Endothelial cell of umbilical vein (primary cell): ENCODE measurements at regions of chr19 and their contacts with region 1.

Region 1: DNA sequence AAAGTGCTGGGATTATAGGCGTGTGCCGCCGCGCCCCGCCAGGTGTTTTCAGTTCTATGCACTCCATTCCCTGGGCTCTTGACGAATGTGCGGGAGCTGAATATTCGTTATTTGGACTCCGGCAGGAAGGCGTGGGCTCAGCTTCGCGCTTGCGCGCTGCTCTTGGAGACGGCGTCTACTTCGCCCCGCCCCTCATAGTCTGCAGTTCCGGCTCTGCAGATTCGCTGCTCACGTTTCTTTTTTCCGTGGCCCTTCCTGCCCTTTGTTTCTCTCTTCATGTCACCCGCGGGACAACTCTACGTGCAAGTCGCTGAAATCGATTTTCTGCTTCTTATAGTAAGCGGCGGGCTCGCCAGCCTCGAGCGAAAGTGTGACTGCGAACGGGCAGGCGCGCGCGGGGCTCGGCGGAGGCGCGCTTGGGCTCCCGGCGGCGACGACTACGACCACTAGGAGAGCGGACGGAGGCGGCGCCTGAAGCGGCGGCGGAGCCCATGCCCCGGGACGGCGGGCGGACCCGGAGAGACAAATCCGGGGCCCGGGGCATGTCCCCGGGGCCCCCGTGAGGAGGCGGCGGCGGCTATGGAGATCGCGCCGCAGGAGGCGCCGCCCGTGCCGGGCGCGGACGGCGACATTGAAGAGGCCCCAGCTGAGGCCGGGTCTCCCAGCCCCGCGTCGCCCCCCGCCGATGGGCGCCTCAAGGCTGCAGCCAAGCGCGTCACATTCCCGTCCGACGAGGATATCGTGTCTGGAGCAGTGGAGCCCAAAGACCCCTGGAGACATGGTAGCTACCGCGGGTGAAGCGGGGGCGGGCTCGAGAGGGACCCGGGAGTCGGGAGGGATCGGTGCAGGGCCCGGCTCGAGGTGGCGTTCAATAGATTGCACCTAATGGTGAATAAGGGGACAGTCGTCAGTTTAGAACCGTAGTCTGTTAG is at the start of gene PPP1R37:
- DNase-seq: peak; percentile 96
- H3K4me3 ChIP-seq: peak within 1 kb of the TSS; percentile 76 to 93 (median 80)
- H3K27ac ChIP-seq: peak within 1 kb of the TSS; percentile 86
- H3K4me1 ChIP-seq: peaks cover 14% of the 10 kb centered on the region
- H3K27me3 ChIP-seq: no peaks in the 10 kb centered on the region
- CTCF ChIP-seq: peak; percentile 11 to 43
- POLR2A ChIP-seq: no peak
- total RNA-seq, gene PPP1R37: 27.1 and 28.5 TPM in 2 replicates

Region 2: GRCh38 chr19:44782729-44783128 is 310.3 kb before region 1 on chr19:
- CTCF ChIA-PET with region 1: no interaction called
- POLR2A ChIA-PET with region 1: no interaction called
- dilution Hi-C with region 1: no loop called
- intact Hi-C with region 1: no loop called
- DNase-seq: no peak
- H3K4me3 ChIP-seq: no peak overlapping the region
- H3K27ac ChIP-seq: no peak overlapping the region
- H3K4me1 ChIP-seq: no peaks in the 10 kb centered on the region
- H3K27me3 ChIP-seq: no peaks in the 10 kb centered on the region
- CTCF ChIP-seq: no peak
- POLR2A ChIP-seq: no peak

Region 3: GRCh38 chr19:45079063-45079910 is 13.7 kb before region 1 on chr19 and contains the start of gene GEMIN7:
- CTCF ChIA-PET with region 1: interaction called, 16 read pairs
- POLR2A ChIA-PET with region 1: interaction called, 6 read pairs
- dilution Hi-C with region 1: no loop called
- intact Hi-C with region 1: loop called (anchors 1 kb)
- DNase-seq: peak; percentile 75
- H3K4me3 ChIP-seq: peak within 1 kb of the TSS; percentile 57 to 79 (median 58)
- H3K27ac ChIP-seq: peak within 1 kb of the TSS; percentile 50
- H3K4me1 ChIP-seq: peaks cover 16% of the 10 kb centered on the region
- H3K27me3 ChIP-seq: no peaks in the 10 kb centered on the region
- CTCF ChIP-seq: peak in 1 of 2 donors; percentile 6
- POLR2A ChIP-seq: no peak
- total RNA-seq, gene GEMIN7: 30.3 and 34.2 TPM in 2 replicates

Region 4: DNA sequence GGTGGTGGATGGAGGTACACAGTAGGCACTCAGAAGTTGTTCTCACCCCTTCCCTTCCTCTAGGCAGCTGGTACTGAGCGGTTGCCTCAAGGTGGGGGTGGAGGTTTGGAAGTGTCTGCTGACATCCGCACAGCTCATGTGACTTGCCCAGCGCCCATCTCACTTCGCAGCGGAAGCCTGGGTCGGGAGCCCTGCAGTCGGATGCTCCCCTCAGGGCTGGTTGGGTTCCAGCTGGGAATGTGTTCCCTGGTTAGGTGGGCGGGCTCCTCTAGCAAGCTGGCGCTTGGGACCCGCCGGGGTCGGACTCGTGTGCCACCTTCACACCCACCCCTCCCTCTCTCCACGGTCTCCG is 10.1 kb after region 1 on chr19:
- CTCF ChIA-PET with region 1: interaction called, 14 read pairs
- POLR2A ChIA-PET with region 1: interaction called, 3 read pairs
- dilution Hi-C with region 1: no loop called
- intact Hi-C with region 1: no loop called
- DNase-seq: no peak
- H3K4me3 ChIP-seq: no peak overlapping the region
- H3K27ac ChIP-seq: no peak overlapping the region
- H3K4me1 ChIP-seq: peaks cover 14% of the 10 kb centered on the region
- H3K27me3 ChIP-seq: no peaks in the 10 kb centered on the region
- CTCF ChIP-seq: no peak
- POLR2A ChIP-seq: no peak

Region 5: DNA sequence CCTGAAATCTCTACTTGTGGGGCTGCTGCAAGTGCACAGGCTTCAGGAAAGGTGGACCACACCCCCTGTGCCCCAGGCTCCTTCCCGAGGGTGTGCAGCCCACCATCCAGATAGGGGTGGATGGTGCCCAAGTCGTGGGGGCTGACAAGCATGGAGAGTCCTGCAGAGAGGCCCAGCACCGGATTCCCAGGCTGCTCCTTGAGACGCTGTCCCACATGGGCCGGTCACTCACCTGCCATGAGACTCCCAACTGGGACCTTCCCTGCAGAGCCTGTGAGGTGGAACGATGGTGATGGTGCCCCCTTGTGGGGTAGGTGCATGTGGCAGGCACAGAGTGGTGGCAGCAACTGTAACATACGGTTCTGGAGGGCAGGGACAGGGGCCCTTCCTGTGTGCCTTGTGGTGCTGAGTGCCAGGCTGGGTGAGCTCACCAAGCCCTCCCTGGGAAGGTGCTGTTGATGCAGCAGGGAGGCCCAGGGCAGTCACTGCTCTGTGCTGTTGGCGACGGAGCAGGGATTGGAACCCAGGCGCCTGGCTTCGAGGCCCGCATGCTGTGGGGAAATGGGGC is 33.0 kb after region 1 on chr19:
- CTCF ChIA-PET with region 1: interaction called, 21 read pairs
- POLR2A ChIA-PET with region 1: no interaction called
- dilution Hi-C with region 1: no loop called
- intact Hi-C with region 1: loop called (anchors 5 kb)
- DNase-seq: peak; percentile 52
- H3K4me3 ChIP-seq: no peak overlapping the region
- H3K27ac ChIP-seq: no peak overlapping the region
- H3K4me1 ChIP-seq: peaks cover 4% of the 10 kb centered on the region
- H3K27me3 ChIP-seq: no peaks in the 10 kb centered on the region
- CTCF ChIP-seq: peak; percentile 74 to 84
- POLR2A ChIP-seq: no peak

Region 6: GRCh38 chr19:45178262-45179071 is 85.5 kb after region 1 on chr19 and contains the start of gene BLOC1S3:
- CTCF ChIA-PET with region 1: interaction called, 13 read pairs
- POLR2A ChIA-PET with region 1: no interaction called
- dilution Hi-C with region 1: no loop called
- intact Hi-C with region 1: loop called (anchors 1 kb)
- DNase-seq: peak; percentile 100
- H3K4me3 ChIP-seq: peak within 1 kb of the TSS; percentile 68 to 91 (median 85)
- H3K27ac ChIP-seq: peak within 1 kb of the TSS; percentile 80
- H3K4me1 ChIP-seq: peaks cover 13% of the 10 kb centered on the region
- H3K27me3 ChIP-seq: no peaks in the 10 kb centered on the region
- CTCF ChIP-seq: peak; percentile 22 to 53
- POLR2A ChIP-seq: peak; percentile 58
- total RNA-seq, gene BLOC1S3: 11.7 and 17.4 TPM in 2 replicates

Region 7: GRCh38 chr19:45245334-45245787 is 152.3 kb after region 1 on chr19 and contains the start of gene EXOC3L2:
- CTCF ChIA-PET with region 1: no interaction called
- POLR2A ChIA-PET with region 1: no interaction called
- dilution Hi-C with region 1: no loop called
- intact Hi-C with region 1: loop called (anchors 5 kb)
- DNase-seq: no peak
- H3K4me3 ChIP-seq: no peak within 1 kb of the TSS
- H3K27ac ChIP-seq: no peak within 1 kb of the TSS
- H3K4me1 ChIP-seq: peaks cover 30% of the 10 kb centered on the region
- H3K27me3 ChIP-seq: no peaks in the 10 kb centered on the region
- CTCF ChIP-seq: no peak
- POLR2A ChIP-seq: no peak
- total RNA-seq, gene EXOC3L2: 0.66 and 1.2 TPM in 2 replicates